Activated naive CD4-positive, alpha-beta T cell treated with anti-CD3 and anti-CD28 coated beads, Interleukin-2, amount 10 ng/mL, durations not matched to agents 7 days and 5 days (primary cell): ENCODE measurements at regions of chr5 and their contacts with region 1.

Region 1: GRCh38 chr5:132426525-132427138 is 57.1 kb downstream of the SLC22A5 start:
- DNase-seq: peak; percentile 81
- H3K4me3 Mint-ChIP-seq: peak overlapping the region; percentile 56
- H3K27ac Mint-ChIP-seq: peak overlapping the region; percentile 98
- H3K4me1 Mint-ChIP-seq: peaks cover 100% of the 10 kb centered on the region
- H3K27me3 Mint-ChIP-seq: no peaks in the 10 kb centered on the region

Region 2: DNA sequence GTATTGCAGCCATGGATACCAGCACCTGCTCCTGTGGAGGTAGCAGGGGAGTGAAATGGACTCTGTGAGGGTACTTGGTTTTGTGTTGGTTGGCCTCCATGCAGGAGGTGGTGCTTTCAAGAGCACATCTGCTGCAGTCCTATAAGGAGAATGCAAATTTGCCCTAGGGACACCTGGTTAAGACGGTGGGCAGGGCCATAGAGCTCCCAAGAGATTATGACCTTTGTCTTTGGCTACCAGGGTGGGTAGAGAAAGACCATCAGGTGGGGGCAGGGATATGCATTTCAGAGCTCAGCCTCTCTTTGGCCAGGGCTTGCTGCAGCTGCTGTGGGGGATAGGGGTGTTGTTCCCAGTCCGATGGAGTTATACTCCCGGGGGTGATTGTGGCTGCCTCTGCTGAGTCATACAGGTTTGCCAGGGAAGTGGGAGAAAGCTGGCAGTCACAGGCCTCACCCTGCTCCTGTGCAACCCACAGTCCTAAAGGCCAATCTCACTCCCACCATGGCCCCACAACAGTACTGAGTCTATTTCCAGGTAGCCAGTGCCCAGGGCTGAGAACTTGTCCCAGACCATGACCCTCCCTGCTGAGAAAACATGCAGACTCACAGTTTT is 183.2 kb before region 1 on chr5:
- CTCF ChIA-PET with region 1: no interaction called
- DNase-seq: no peak
- H3K4me3 Mint-ChIP-seq: no peak overlapping the region
- H3K27ac Mint-ChIP-seq: no peak overlapping the region
- H3K4me1 Mint-ChIP-seq: no peaks in the 10 kb centered on the region
- H3K27me3 Mint-ChIP-seq: peaks cover 48% of the 10 kb centered on the region

Region 3: GRCh38 chr5:132456296-132457001 is 29.8 kb after region 1 on chr5:
- CTCF ChIA-PET with region 1: interaction called, 20 read pairs
- DNase-seq: peak; percentile 78
- H3K4me3 Mint-ChIP-seq: peak overlapping the region; percentile 63
- H3K27ac Mint-ChIP-seq: peak overlapping the region; percentile 100
- H3K4me1 Mint-ChIP-seq: peaks cover 91% of the 10 kb centered on the region
- H3K27me3 Mint-ChIP-seq: no peaks in the 10 kb centered on the region

Region 4: DNA sequence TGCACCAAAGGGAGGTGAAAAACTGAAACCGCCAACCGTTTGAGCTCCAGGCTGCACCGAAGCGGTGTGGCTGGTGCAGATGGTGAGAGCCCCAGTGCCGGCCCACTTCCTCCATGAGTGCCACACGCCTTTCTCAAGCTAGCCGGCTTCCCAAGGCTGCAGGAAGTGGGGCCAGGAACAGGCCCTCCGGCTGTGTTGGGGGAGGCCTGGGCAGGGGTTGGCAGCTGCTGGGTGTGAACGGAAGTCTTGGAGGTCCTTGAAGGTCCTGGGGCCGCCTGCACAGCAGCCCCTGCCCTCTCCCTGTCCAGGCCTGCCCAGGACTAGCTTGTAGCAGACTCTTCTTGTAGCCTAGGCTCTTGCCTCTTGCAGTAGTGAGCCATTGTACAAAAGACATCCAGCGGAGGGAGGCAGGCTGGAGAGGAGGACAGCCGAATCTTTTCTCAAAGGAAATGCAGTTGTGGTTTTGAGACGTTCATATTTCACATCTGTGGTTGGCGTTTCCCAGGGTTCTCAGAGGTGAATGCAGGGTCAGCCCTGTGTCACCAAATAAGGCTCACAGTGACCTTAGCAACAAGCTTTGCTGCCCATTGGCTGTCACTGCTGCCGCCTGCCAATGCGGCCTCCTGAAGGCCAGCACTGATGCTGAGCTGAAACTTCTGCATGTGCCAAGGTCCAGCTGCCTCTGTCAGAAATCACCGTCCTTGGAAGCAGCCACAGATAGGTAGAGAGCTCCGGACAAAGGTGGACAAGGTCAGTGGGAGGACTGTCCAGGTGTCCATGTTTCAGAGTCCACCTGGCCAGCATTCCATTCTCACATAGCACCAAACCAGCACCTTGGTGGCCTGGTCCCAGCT is 40.0 kb after region 1 on chr5:
- CTCF ChIA-PET with region 1: interaction called, 63 read pairs
- DNase-seq: peak; percentile 87
- H3K4me3 Mint-ChIP-seq: peak overlapping the region; percentile 50
- H3K27ac Mint-ChIP-seq: peak overlapping the region; percentile 91
- H3K4me1 Mint-ChIP-seq: peaks cover 99% of the 10 kb centered on the region
- H3K27me3 Mint-ChIP-seq: no peaks in the 10 kb centered on the region

Region 5: DNA sequence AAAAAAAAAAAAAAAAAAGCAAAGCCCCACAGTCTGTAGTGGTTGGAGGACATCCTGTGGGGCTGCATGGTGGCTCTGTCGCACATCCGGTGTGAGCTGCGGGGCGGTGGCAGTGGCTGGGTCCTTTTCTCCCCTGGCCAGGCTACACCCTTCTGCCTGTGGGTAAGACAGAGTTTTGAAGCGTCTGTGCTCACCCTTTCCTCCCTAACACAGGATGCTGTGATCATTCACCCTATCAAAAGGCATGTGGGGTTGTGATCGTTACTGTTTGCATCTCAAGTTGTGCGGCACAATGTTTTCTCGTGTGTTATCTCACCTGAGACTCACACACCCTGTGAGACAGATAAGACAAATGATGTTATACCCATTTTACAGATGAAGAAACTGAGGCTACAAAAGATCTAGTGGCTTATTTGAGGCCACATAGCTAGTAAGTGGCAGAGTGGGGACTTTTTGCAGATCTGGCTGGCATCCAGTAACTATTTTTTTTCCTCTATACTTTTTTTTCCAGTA is 46.4 kb after region 1 on chr5:
- CTCF ChIA-PET with region 1: interaction called, 63 read pairs
- DNase-seq: peak; percentile 94
- H3K4me3 Mint-ChIP-seq: peak overlapping the region; percentile 16
- H3K27ac Mint-ChIP-seq: peak overlapping the region; percentile 95
- H3K4me1 Mint-ChIP-seq: peaks cover 95% of the 10 kb centered on the region
- H3K27me3 Mint-ChIP-seq: no peaks in the 10 kb centered on the region

Region 6: DNA sequence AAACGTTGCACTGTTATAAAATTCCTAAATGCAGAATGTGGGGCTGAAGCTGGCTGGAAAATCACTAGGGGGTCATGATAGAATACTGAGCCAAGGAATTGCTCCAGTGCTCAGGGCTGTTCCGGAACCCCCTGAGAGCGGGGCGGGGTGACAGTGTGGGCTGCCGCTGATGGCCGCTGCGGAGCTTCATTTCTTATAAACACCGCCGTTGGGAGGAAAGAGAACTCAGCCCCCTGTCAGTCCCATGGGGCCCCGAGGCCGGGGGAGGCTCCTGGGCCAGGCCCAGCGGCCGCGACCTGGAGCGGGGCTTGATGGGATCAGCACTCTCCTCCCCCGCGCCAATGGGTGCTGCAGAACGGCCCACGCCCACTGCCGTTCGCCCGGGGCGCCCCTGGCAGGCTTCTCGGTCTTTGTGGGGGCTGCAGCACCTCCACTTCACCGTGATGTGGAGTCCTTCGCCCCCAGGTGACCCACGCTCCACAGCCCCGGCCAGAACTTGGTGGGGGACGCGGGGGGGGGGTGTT is 69.1 kb after region 1 on chr5:
- CTCF ChIA-PET with region 1: interaction called, 87 read pairs
- DNase-seq: peak; percentile 86
- H3K4me3 Mint-ChIP-seq: peak overlapping the region; percentile 95
- H3K27ac Mint-ChIP-seq: peak overlapping the region; percentile 99
- H3K4me1 Mint-ChIP-seq: peaks cover 77% of the 10 kb centered on the region
- H3K27me3 Mint-ChIP-seq: no peaks in the 10 kb centered on the region